ENCODE measurements at regions of chr6 and their contacts with region 1.

Region 1: DNA sequence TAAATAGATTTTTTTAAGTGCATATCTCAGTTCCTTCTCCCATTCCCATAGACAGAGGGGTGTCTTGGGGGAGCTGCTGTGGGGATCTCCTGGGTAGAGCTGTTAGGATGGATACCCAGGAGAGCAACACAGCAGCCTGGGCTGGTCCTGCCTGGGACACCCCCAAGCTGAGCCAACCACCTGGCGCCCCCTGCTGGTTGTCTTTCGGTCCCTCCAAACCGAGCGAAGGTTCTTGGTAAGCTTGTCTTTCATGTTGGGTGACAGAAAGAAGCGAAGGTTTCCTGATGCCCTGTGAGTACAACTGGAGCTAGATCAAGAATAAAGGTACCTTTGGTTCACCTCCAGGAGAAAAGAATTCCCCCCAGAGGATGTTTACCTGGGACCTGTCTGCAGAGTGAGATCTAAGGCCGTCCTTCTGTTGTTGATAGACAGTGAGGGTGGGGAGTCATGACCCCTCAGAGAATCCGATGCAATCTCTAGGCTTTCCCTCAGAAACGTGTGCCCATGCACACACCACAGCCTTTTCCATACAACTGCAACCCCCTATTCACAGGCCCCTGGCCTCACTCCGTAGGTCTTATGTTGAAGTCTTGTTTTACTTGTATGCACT is 50.8 kb downstream of the SNX9 start:
- DNase-seq: peak; percentile 70 to 89 (median 79)
- ATAC-seq: peak; percentile 75 to 88
- H3K4me3 Mint-ChIP-seq: peak overlapping the region in 4 of 10 donors; percentile 10 to 46 (median 35)
- H3K27ac Mint-ChIP-seq: peak overlapping the region in 8 of 10 donors; percentile 11 to 86 (median 54)
- H3K4me1 Mint-ChIP-seq: peaks cover 16 to 39% (median 31%) of the 10 kb centered on the region in 4 donors
- H3K27me3 Mint-ChIP-seq: no peaks in the 10 kb centered on the region

Region 2: GRCh38 chr6:157756708-157757429 is 117.0 kb before region 1 on chr6:
- POLR2A ChIA-PET with region 1: interaction called, 10 read pairs
- DNase-seq: peak; percentile 61 to 88 (median 73)
- ATAC-seq: peak in 1 of 2 donors; percentile 5
- H3K4me3 Mint-ChIP-seq: peak overlapping the region; percentile 25 to 82 (median 72)
- H3K27ac Mint-ChIP-seq: peak overlapping the region; percentile 80 to 99 (median 96)
- H3K4me1 Mint-ChIP-seq: peaks cover 45 to 78% (median 77%) of the 10 kb centered on the region in 4 donors
- H3K27me3 Mint-ChIP-seq: no peaks in the 10 kb centered on the region

Region 3: DNA sequence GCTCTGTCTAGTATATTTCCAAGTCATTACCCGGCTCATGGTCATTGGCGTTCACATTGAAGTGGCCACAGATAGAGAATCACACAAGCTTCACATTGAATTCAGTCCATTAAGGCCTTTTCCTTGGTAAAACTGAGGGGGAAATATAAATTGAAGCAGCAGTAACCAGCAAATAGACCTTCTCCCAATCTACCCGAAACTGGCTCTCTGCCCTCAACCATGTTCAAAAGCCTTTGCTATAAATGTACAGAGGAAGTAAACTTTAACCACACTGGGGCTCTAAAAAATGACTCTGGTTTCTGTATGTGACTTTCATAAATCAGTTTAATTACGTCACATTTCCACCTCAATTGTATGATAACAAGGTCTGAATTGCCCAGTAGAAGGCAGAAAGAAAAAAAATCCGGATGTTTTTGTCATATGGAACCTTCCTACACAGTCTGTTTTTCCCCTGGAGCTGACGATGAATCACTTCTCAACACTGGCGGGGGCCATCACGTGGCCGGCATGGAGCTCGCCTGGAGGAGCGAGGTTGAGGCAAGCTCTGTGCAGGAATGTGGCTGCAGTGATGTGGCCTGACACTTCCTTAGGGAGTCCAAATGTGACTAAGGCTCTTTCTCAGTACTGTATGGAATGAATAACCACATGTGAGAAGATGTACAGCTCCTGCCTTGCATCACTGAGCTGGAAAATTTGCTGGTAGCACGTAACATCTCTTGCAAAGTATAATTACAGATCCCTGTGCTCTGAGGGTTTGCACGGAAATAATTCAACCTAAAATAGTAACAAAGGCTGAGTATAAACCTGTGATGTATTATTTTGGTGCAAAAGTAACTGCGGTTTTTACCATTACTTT is 109.4 kb before region 1 on chr6:
- POLR2A ChIA-PET with region 1: interaction called, 10 read pairs
- DNase-seq: peak; percentile 74 to 94 (median 86)
- ATAC-seq: peak; percentile 57 to 75
- H3K4me3 Mint-ChIP-seq: peak overlapping the region; percentile 67 to 86 (median 78)
- H3K27ac Mint-ChIP-seq: peak overlapping the region; percentile 91 to 98 (median 97)
- H3K4me1 Mint-ChIP-seq: peaks cover 50 to 91% (median 80%) of the 10 kb centered on the region in 4 donors
- H3K27me3 Mint-ChIP-seq: peaks cover 0 to 3% (median 0%) of the 10 kb centered on the region in 5 donors

Region 4: GRCh38 chr6:157885211-157885788 is 11.5 kb after region 1 on chr6:
- POLR2A ChIA-PET with region 1: interaction called, 12 read pairs
- DNase-seq: peak in 9 of 10 donors; percentile 27 to 90 (median 77)
- ATAC-seq: peak; percentile 81 to 84
- H3K4me3 Mint-ChIP-seq: peak overlapping the region; percentile 22 to 67 (median 40)
- H3K27ac Mint-ChIP-seq: peak overlapping the region; percentile 88 to 99 (median 96)
- H3K4me1 Mint-ChIP-seq: peaks cover 42 to 80% (median 71%) of the 10 kb centered on the region in 4 donors
- H3K27me3 Mint-ChIP-seq: no peaks in the 10 kb centered on the region

Region 5: GRCh38 chr6:157928428-157928827 is 54.6 kb after region 1 on chr6:
- POLR2A ChIA-PET with region 1: no interaction called
- DNase-seq: no peak
- ATAC-seq: no peak
- H3K4me3 Mint-ChIP-seq: no peak overlapping the region
- H3K27ac Mint-ChIP-seq: peak overlapping the region in 1 of 10 donors; percentile 53
- H3K4me1 Mint-ChIP-seq: peaks cover 0 to 2% (median 0%) of the 10 kb centered on the region in 4 donors
- H3K27me3 Mint-ChIP-seq: no peaks in the 10 kb centered on the region

Region 6: DNA sequence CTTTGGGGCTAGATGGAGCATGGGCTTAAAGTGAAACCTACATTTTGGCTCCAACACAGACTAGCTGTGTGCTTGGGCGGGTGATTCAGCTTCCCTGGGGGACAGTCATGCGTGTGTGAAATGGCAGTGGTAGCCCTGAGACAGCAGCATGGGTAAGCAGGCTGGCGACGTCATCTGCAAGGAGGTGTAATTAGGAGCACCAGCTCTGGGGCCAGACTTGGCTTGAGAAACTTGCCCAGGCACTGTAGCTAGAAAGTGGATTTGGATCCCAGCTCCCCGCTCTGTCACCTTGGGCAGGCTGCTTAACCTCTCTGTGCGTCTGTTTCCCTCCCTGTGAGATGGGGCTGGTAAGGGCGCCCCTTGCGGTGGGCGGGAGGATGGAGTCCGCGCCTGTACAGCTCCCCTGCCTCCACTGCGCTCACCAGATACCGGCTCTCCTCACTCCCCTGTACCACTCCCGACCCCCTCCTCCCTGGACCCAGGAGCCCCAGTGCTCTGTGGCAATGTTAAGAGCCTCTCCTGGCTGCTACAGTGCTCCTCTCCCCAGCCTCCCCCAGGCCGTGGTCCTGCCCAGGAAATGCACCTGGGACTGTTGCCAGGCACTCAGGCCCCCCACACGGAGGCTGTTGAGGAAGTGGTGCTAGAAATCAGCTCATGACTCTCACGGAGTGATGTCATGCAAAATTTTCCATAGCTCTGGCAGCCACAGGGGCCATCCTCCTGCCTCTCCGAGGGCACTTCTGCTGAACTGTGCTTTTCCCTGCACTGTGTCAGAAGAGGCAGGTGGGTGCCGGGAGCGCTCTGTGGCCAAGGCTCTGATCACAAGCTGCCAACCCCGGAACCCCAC is 152.4 kb after region 1 on chr6:
- POLR2A ChIA-PET with region 1: no interaction called
- DNase-seq: peak; percentile 67 to 94 (median 82)
- ATAC-seq: peak; percentile 76 to 79
- H3K4me3 Mint-ChIP-seq: peak overlapping the region; percentile 73 to 91 (median 86)
- H3K27ac Mint-ChIP-seq: peak overlapping the region; percentile 90 to 99 (median 98)
- H3K4me1 Mint-ChIP-seq: peaks cover 28 to 42% (median 40%) of the 10 kb centered on the region in 4 donors
- H3K27me3 Mint-ChIP-seq: no peaks in the 10 kb centered on the region